AG04450 (cell line): ENCODE measurements at regions of chr5 and their contacts with region 1.

Region 1: GRCh38 chr5:148443998-148444397 is 60.2 kb downstream of the FBXO38 start:
- DNase-seq: peak; percentile 49
- H3K4me3 ChIP-seq: no peak overlapping the region
- H3K27ac ChIP-seq: no peak overlapping the region
- H3K27me3 ChIP-seq: no peaks in the 10 kb centered on the region
- CTCF ChIP-seq: peak; percentile 71

Region 2: DNA sequence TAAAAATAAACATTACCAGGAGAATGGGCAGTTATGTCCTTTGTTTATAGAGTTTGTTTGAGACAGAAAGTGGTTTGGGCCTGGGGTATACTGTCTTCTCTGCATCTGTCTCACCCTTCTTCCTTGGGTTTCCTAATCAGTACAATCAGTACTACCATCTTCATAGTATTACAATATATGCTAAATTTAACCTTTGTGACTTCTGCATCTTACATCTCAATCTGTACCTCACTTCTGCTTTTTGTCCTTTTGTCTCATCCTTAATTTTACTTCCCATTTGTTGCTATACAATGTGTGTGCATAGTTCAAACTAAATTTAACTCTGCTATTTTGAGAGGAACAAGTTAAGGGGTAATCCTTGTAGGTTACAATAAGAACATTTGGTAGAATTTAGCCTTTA is 40.7 kb before region 1 on chr5:
- CTCF ChIA-PET with region 1: interaction called, 19 read pairs
- POLR2A ChIA-PET with region 1: no interaction called
- DNase-seq: no peak
- H3K4me3 ChIP-seq: no peak overlapping the region
- H3K27ac ChIP-seq: no peak overlapping the region
- H3K27me3 ChIP-seq: no peaks in the 10 kb centered on the region
- CTCF ChIP-seq: no peak

Region 3: DNA sequence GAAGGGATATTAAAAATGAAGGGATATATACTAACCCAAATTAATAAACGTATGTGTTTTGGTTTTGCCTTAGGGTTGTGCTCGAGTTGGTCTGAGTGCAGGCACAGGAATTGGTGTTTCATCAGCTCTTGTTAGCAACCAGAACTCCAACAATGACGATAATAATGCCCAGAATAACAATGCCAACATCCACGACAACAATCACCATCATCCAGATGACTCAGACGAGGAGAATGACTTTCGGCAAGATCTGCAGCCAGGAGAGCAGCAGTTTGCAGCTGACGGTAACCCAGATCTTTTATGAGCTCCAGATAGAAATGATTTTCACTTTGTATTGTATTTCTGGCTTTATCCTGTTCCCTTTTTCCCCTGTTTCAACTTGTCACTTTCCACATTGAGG is 27.1 kb before region 1 on chr5:
- CTCF ChIA-PET with region 1: interaction called, 19 read pairs
- POLR2A ChIA-PET with region 1: no interaction called
- DNase-seq: no peak
- H3K4me3 ChIP-seq: no peak overlapping the region
- H3K27ac ChIP-seq: no peak overlapping the region
- H3K27me3 ChIP-seq: no peaks in the 10 kb centered on the region
- CTCF ChIP-seq: no peak

Region 4: GRCh38 chr5:148428848-148429247 is 15.2 kb before region 1 on chr5:
- CTCF ChIA-PET with region 1: interaction called, 51 read pairs
- POLR2A ChIA-PET with region 1: no interaction called
- DNase-seq: no peak
- H3K4me3 ChIP-seq: no peak overlapping the region
- H3K27ac ChIP-seq: no peak overlapping the region
- H3K27me3 ChIP-seq: no peaks in the 10 kb centered on the region
- CTCF ChIP-seq: no peak

Region 5: GRCh38 chr5:148482691-148483462 is 38.9 kb after region 1 on chr5:
- CTCF ChIA-PET with region 1: interaction called, 15 read pairs
- POLR2A ChIA-PET with region 1: no interaction called
- DNase-seq: no peak
- H3K4me3 ChIP-seq: no peak overlapping the region
- H3K27ac ChIP-seq: no peak overlapping the region
- H3K27me3 ChIP-seq: peaks cover 3% of the 10 kb centered on the region
- CTCF ChIP-seq: peak; percentile 65

Region 6: DNA sequence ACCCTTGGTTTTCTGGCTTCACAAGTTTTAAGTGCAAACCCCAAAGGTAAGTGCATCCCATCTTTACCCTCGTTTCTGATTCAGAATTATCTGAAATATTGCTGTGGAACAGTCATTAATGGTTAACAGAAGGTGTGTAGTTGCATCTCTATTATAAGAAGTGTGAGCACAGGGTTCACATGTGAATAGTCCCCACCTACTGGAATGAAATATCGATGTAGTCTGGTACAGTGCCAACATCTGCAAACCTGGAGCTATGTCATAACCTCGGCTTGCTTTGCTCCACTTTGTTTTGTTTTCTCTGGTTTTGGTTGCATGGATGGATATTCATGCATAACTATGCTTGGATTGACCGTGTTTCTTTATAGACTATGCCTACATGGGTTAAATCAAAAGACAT is 197.7 kb after region 1 on chr5:
- CTCF ChIA-PET with region 1: no interaction called
- POLR2A ChIA-PET with region 1: no interaction called
- DNase-seq: no peak
- H3K4me3 ChIP-seq: no peak overlapping the region
- H3K27ac ChIP-seq: no peak overlapping the region
- H3K27me3 ChIP-seq: no peaks in the 10 kb centered on the region
- CTCF ChIP-seq: no peak